Heart right ventricle (tissue), 16 donors: ENCODE measurements at regions of chr1 and their contacts with region 1.

Region 1: GRCh38 chr1:208335371-208336136 is 91.4 kb upstream of the PLXNA2 start:
- DNase-seq: no peak
- ATAC-seq: no peak
- H3K4me3 ChIP-seq: no peak overlapping the region
- H3K27ac ChIP-seq: no peak overlapping the region
- H3K4me1 ChIP-seq: no peaks in the 10 kb centered on the region
- H3K27me3 ChIP-seq: peaks cover 0 to 12% (median 0%) of the 10 kb centered on the region in 7 donors
- CTCF ChIP-seq: no peak

Region 2: DNA sequence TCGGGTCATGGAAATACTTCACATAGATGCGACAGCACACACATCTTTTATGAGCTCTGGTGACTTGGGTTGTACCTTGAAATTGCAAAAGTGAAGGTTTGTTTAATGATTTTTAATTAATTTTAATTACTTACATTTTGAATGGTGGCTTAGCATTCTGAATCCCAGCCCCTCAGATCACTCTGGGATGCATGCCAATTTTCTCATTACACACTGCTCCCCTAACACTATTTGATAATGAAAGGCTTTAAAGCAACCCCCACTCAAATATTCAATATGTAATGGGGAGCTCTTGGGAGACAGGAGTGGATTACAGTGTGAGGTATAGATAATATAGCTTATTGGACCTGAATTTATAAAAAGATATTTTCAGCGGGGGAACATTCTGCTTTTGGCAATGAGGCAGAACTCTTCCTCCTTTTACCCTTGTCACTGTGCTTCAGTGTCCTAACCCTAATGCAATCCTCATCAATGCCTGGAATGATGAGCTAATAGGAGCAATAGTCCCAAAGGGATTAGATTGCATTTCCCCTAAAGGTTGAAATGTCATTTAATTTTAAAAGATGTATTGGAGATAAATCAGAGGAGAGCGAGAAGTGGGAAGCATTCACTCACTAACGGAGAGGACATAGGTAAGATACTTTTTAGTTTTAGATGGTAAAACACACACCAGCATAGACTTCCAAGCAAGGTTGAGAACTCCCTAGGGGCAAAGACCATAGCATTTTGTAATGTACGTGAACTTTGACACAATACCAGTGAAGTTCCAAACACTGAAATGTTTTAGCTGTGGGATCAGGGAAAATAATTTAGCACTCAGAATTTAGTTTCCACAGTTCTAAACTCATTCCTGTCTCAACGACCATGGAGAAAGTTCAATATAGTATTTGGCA is 292.7 kb after region 1 on chr1:
- intact Hi-C with region 1: loop called in 1 of 10 experiments (anchors 5 kb)
- DNase-seq: no peak
- ATAC-seq: no peak
- H3K4me3 ChIP-seq: no peak overlapping the region
- H3K27ac ChIP-seq: no peak overlapping the region
- H3K4me1 ChIP-seq: no peaks in the 10 kb centered on the region
- H3K27me3 ChIP-seq: no peaks in the 10 kb centered on the region
- CTCF ChIP-seq: no peak